Right ventricle myocardium superior (tissue), 1 donor: ENCODE measurements at regions of chr13 and their contacts with region 1.

Region 1: DNA sequence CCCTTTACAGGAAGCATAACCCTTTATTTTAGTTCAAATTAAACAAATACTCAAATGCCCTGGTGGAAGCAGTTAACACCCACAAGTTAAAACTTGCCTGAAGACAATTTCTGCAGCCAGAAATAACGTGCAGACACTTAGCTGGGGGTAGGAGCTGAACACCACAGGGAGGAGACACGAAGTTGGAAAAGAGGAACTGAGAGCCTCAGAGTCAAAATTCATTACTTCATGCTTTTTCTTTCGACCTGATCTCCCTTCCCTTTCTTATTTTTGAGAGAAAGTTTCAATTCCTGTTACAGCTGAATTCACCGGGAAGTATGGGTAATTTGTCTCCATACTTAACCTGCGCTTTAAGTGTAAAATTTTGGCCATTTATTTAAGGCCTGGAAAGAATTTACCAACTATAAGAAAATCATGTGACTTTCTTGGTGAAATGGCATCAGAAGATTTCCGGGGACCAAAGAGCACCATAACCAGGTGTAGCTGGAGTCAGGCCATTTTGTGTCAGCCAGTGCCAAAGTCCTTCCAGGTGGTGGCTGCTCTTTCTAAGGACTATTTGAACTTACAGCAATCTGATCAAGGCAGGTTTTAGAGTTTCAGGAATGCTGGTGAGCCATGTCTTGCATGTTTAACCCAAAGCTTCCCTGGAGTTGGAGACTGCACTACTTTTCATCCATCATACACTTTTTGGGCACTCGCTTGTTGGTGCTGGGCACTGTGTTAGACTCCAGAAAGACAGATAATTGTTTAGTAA is 46.5 kb upstream of the RCBTB2 start:
- DNase-seq: no peak
- ATAC-seq: peak; percentile 62

Region 2: DNA sequence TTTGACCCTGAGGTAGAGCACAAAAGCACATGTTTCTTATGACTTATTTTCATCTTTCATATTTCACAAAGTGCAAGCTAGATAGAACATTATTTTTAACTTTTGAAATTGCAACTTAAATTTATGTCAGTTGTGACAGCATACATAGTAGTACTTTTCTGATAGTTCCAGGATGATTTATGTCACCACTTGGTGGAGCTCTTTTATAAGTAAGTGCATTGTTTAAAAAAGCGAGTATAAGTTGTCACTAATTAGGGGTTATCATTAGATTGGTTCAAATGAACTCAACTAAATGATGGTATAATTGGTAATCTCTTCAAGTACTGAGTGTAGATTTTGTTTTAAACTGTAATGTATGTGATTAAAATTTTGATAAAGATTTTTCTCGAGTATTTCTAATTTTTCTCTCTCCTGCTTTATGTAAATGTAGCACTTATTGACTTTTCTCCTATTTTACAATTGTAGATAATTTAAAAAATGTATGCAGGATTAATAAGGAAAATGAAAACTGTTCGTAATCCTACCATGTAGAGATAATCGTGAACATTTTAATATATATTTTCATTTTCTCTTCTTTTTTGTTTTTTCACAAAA is 244.7 kb before region 1 on chr13:
- intact Hi-C with region 1: loop called (anchors 5 kb)
- DNase-seq: no peak
- ATAC-seq: peak; percentile 74